Left cardiac atrium (tissue), 4 donors: ENCODE measurements at regions of chr7 and their contacts with region 1.

Region 1: DNA sequence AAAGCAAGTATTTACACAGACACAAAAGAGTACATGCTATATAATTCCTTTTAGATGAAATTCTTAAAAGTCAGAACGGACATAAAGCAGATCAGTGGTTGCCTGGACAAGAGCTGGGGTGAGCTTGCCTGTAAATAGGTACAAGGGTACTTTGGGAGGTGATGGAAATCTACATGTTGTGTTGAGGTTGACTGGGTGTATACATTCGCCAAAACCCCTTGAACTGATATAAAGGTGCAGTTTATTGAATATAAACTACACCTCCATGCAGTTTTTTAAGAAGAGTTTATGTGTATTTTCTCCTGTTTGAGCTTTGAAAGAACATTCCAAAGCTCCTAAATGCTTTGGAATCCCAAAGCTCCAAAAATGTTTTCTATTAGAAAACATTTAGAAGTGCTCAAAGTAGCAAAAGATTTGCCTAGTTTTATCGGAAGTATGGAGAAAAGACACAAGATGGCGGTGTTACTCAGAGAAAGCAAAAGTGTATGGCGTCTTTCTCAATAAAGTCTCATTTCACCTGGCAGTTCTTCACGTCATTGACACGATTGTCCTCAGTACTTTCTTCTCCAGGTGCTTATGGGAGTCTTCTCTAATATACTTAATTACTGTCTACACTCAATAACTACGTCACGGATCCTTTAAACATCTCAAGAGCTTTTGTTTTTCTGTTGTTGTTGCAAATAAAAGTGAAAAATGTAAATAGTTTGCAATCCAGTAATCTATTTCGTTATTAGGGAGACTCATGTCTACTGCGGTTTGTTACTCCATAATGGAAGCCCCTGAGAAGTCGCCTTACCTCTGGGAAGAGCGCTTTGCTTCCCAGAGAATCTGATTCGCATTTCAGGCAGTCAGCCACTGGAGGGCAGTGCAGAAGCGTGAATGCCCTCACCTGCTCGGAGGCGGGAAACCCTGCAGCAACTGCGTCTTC is 14.7 kb upstream of the SEC61G start:
- DNase-seq: peak; percentile 83
- ATAC-seq: peak; percentile 95 to 98

Region 2: GRCh38 chr7:55415173-55415778 is 641.5 kb after region 1 on chr7:
- intact Hi-C with region 1: loop called in 1 of 2 experiments (anchors 10 kb)
- DNase-seq: peak; percentile 87
- ATAC-seq: peak; percentile 77 to 86